Heart left ventricle (tissue), 16 donors: ENCODE measurements at regions of chr6 and their contacts with region 1.

Region 1: DNA sequence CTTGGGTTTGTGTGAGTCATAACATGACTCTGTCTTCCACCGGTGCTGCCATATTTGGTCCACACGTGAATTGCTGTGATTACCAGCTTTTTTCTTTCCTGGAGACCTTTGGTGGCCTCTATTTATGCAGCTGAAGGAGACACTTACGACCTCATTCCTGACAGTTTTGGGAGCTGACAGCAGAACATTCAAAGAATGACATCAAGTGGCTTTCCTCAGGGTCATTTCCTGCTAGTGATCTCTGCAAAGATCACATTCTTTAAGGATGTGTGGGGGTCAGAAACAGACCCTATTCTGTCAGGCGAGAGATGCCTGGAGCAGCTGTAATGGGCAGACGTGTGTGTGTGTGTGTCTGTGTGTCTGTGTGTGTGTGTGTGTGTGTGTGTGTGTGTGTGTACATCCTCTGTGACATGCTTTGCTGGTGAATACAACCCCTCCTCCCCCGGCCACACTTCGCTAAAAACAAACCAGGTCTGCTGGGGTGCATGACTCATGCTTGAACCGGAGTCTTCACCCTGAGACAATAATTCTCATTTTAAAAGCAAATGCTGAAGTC is 115.6 kb downstream of the TMEM170B start:
- DNase-seq: peak in 2 of 5 donors; percentile 19 to 60
- ATAC-seq: peak in 3 of 4 donors; percentile 53 to 72 (median 71)
- H3K4me3 ChIP-seq: no peak overlapping the region
- H3K27ac ChIP-seq: peak overlapping the region in 1 of 12 donors; percentile 54
- H3K4me1 ChIP-seq: peaks cover 2 to 51% (median 25%) of the 10 kb centered on the region in 12 donors
- H3K27me3 ChIP-seq: peaks cover 0 to 6% (median 0%) of the 10 kb centered on the region in 9 donors
- CTCF ChIP-seq: no peak
- POLR2A ChIP-seq: no peak

Region 2: DNA sequence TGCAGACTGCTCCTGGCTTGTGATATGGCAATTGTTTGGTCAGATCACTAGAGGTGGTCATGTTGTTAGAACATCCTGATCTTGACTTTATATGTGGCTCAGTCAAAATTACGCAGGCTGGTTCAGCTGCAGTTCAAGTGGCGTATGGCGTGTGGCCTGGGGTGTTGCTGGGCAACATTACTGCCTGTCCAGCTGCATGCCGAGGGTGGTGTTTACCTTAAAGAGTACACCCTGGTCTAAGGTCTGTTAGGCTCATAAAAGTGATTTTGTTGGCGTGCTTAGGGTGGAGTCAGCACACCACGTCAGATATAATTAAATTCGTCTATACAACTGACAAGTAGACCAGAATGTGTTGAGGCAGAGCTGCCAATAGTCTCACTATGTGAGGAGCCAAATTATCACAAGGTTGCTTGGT is 365.1 kb before region 1 on chr6:
- intact Hi-C with region 1: no loop called
- DNase-seq: no peak
- ATAC-seq: peak in 1 of 4 donors; percentile 29
- H3K4me3 ChIP-seq: no peak overlapping the region
- H3K27ac ChIP-seq: peak overlapping the region in 1 of 12 donors; percentile 28
- H3K4me1 ChIP-seq: no peaks in the 10 kb centered on the region
- H3K27me3 ChIP-seq: no peaks in the 10 kb centered on the region
- CTCF ChIP-seq: no peak
- POLR2A ChIP-seq: no peak

Region 3: DNA sequence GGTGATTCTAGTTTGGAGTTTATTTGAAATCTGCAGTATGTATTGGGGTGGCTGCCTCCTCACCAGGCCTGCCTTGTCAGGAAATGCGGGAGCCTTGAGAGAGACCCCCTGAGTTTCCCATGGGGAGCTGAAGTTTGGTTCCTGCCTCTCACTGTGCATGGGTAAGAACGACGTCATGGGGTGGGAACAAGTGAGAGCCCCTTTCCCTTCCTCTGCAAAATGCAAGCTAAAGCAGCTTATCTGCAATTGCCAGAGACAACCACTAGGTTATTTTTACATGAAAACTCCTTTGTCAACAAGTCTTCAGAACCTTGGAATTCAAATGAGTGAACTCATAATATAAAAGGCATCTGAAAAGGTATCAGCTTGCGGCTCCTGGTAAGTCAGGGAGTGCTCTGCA is 57.2 kb before region 1 on chr6:
- intact Hi-C with region 1: loop called in 1 of 10 experiments (anchors 5 kb)
- DNase-seq: no peak
- ATAC-seq: no peak
- H3K4me3 ChIP-seq: no peak overlapping the region
- H3K27ac ChIP-seq: no peak overlapping the region
- H3K4me1 ChIP-seq: peaks cover 0 to 6% (median 0%) of the 10 kb centered on the region in 12 donors
- H3K27me3 ChIP-seq: no peaks in the 10 kb centered on the region
- CTCF ChIP-seq: peak in 4 of 12 donors; percentile 7 to 39 (median 21)
- POLR2A ChIP-seq: no peak

Region 4: GRCh38 chr6:11700118-11700718 is 47.1 kb after region 1 on chr6:
- intact Hi-C with region 1: loop called in 3 of 10 experiments (anchors 5 kb)
- DNase-seq: no peak
- ATAC-seq: no peak
- H3K4me3 ChIP-seq: no peak overlapping the region
- H3K27ac ChIP-seq: no peak overlapping the region
- H3K4me1 ChIP-seq: peaks cover 0 to 5% (median 0%) of the 10 kb centered on the region in 12 donors
- H3K27me3 ChIP-seq: no peaks in the 10 kb centered on the region
- CTCF ChIP-seq: peak; percentile 26 to 68 (median 46)
- POLR2A ChIP-seq: no peak

Region 5: GRCh38 chr6:11804135-11804534 is 151.0 kb after region 1 on chr6:
- intact Hi-C with region 1: no loop called
- DNase-seq: no peak
- ATAC-seq: no peak
- H3K4me3 ChIP-seq: no peak overlapping the region
- H3K27ac ChIP-seq: no peak overlapping the region
- H3K4me1 ChIP-seq: no peaks in the 10 kb centered on the region
- H3K27me3 ChIP-seq: no peaks in the 10 kb centered on the region
- CTCF ChIP-seq: no peak
- POLR2A ChIP-seq: no peak

Region 6: DNA sequence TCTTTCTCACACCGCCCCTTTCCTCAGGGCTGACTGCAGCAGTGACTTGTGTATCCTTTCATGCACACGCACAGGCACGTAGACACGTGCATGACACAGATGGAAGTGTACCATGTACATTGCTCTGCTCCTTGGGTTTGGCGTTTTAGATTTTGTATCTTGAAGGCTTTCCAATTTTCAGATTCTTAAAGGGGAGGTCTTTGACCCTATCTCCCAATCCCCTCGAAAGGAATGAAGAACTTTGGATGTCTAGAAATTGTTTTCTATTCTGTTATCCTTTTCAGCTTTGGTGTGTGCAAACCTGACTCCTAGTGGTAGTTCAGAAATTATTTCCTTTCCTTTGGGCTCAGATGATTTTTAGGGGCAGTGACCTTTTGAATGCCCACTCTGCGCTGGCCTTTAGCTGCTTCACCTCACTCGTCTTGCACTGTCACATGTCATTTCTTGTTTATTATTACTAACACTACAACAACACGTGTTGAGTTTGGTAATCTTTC is 422.0 kb after region 1 on chr6:
- intact Hi-C with region 1: loop called in 1 of 10 experiments (anchors 10 kb)
- DNase-seq: no peak
- ATAC-seq: no peak
- H3K4me3 ChIP-seq: no peak overlapping the region
- H3K27ac ChIP-seq: no peak overlapping the region
- H3K4me1 ChIP-seq: peaks cover 0 to 17% (median 0%) of the 10 kb centered on the region in 12 donors
- H3K27me3 ChIP-seq: no peaks in the 10 kb centered on the region
- CTCF ChIP-seq: peak in 9 of 12 donors; percentile 36 to 57 (median 44)
- POLR2A ChIP-seq: no peak

Region 7: GRCh38 chr6:12289933-12290820 is 637.1 kb after region 1 on chr6 and contains the start of gene EDN1:
- intact Hi-C with region 1: loop called in 8 of 10 experiments (anchors 1 to 5 kb)
- DNase-seq: peak; percentile 72 to 86 (median 80)
- ATAC-seq: peak; percentile 78 to 95 (median 91)
- H3K4me3 ChIP-seq: peak within 1 kb of the TSS; percentile 1 to 62 (median 50)
- H3K27ac ChIP-seq: peak within 1 kb of the TSS in 11 of 12 donors; percentile 13 to 74 (median 41)
- H3K4me1 ChIP-seq: peaks cover 0 to 27% (median 9%) of the 10 kb centered on the region in 12 donors
- H3K27me3 ChIP-seq: peaks cover 0 to 15% (median 4%) of the 10 kb centered on the region in 9 donors
- CTCF ChIP-seq: peak; percentile 27 to 66 (median 42)
- POLR2A ChIP-seq: peak in 1 of 2 donors; percentile 67
- total RNA-seq, gene EDN1: 1.0 to 11.6 (median 3.2) TPM